T-cell (primary cell): ENCODE measurements at regions of chr5 and their contacts with region 1.

Region 1: DNA sequence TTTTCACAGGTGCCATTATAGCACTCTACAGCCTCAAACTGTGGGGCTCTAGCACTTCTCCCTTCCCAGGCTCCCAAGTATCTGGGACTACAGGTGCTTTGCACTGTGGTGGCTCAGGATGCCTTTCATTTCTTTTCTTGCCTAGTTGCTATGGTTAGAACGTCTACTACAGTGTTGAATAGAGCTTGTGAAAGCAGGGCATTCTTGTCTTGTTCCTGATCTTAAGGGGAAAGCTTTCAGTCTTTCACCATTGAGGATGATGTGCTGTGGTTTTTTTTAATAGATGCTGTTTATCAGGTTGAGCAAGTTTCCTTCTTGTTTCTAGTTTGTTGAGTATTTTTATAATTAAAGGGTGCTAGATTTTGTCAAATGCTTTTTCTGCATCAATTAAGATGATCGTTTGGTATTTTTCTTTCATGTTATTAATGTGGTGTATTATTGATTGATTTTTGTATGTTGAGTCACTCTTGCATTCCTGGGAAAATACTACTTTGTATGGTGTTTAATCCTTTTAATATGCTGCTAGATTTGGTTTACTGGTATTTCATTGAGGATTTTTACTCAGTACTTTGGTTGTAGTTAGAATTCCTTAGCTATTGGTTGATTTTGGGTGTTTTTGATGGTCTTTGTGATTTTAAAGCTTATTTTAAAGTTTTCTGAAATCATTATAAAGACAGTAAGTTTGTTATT is 35.6 kb downstream of the GPBP1 start:
- DNase-seq: no peak
- ATAC-seq: no peak
- H3K4me3 ChIP-seq: no peak overlapping the region
- H3K4me3 Mint-ChIP-seq: peak overlapping the region in 2 of 3 donors; percentile 10 to 29
- H3K27ac ChIP-seq: no peak overlapping the region
- H3K27ac Mint-ChIP-seq: peak overlapping the region; percentile 58 to 71
- H3K4me1 ChIP-seq: peaks cover 0 to 32% of the 10 kb centered on the region in 2 experiments
- H3K4me1 Mint-ChIP-seq: peaks cover 73 to 83% (median 79%) of the 10 kb centered on the region in 3 donors
- H3K27me3 ChIP-seq: no peaks in the 10 kb centered on the region
- H3K27me3 Mint-ChIP-seq: no peaks in the 10 kb centered on the region

Region 2: DNA sequence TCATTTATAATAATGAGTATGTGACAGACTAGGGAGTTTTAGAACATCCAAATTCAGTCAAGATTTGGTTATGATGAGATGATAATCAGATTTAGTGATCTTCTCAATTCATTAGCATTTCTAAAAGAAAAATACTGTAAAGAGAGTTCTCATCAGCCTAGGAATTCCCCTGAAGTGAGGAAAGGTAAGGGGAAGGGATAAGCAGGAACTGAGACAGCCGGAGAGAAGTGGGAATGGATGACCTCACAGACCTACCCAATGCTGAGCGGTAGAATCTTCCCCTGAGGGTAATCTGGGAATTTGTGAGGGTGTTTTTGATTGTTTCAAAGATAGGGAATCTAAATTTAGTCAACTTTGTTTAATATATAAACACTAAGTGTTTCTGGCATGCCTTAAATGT is 52.4 kb before region 1 on chr5:
- CTCF ChIA-PET with region 1: no interaction called
- POLR2A ChIA-PET with region 1: no interaction called
- DNase-seq: no peak
- ATAC-seq: no peak
- H3K4me3 ChIP-seq: no peak overlapping the region
- H3K4me3 Mint-ChIP-seq: no peak overlapping the region
- H3K27ac ChIP-seq: no peak overlapping the region
- H3K27ac Mint-ChIP-seq: no peak overlapping the region
- H3K4me1 ChIP-seq: no peaks in the 10 kb centered on the region
- H3K4me1 Mint-ChIP-seq: no peaks in the 10 kb centered on the region
- H3K27me3 ChIP-seq: no peaks in the 10 kb centered on the region
- H3K27me3 Mint-ChIP-seq: no peaks in the 10 kb centered on the region

Region 3: GRCh38 chr5:57173185-57174127 is 36.0 kb before region 1 on chr5 and contains the start of gene GPBP1:
- CTCF ChIA-PET with region 1: interaction called in 1 of 2 experiments, 3 read pairs
- POLR2A ChIA-PET with region 1: interaction called in 1 of 2 experiments, 13 read pairs
- DNase-seq: peak; percentile 94 to 99 (median 98)
- ATAC-seq: peak; percentile 74 to 83 (median 80)
- H3K4me3 ChIP-seq: peak within 1 kb of the TSS; percentile 86 to 87
- H3K4me3 Mint-ChIP-seq: peak within 1 kb of the TSS; percentile 89 to 100 (median 97)
- H3K27ac ChIP-seq: peak within 1 kb of the TSS; percentile 99
- H3K27ac Mint-ChIP-seq: peak within 1 kb of the TSS; percentile 99 to 100
- H3K4me1 ChIP-seq: peaks cover 17 to 25% of the 10 kb centered on the region in 2 experiments
- H3K4me1 Mint-ChIP-seq: peaks cover 37 to 48% (median 37%) of the 10 kb centered on the region in 3 donors
- H3K27me3 ChIP-seq: no peaks in the 10 kb centered on the region
- H3K27me3 Mint-ChIP-seq: no peaks in the 10 kb centered on the region
- total RNA-seq, gene GPBP1: 97.1 to 125 (median 101) TPM